A673 (cell line): ENCODE measurements at regions of chr3 and their contacts with region 1.

Region 1: DNA sequence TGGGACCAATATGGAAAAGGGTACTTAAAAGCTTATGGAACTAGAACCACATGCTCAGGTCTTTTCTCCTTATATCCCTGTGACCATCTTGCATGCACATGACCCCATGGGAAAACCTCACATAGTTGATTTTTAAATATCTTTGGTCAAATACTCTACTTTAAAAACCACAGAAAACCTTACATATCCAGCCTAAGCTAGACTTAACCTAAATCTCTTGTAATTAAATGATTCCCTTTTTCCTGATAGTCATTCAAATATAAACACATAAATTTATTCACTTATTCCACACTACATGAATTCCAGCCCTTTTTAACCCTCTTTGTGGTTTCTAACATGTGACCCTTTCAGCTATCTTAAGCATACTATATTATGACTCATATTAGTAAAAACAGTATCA is 46.8 kb downstream of the DNAJC13 start:
- DNase-seq: no peak
- H3K4me3 ChIP-seq: no peak overlapping the region
- H3K27ac ChIP-seq: no peak overlapping the region
- H3K4me1 ChIP-seq: no peaks in the 10 kb centered on the region
- H3K27me3 ChIP-seq: no peaks in the 10 kb centered on the region
- CTCF ChIP-seq: no peak

Region 2: GRCh38 chr3:132507657-132508056 is 43.6 kb after region 1 on chr3:
- CTCF ChIA-PET with region 1: no interaction called
- POLR2A ChIA-PET with region 1: interaction called, 29 read pairs
- intact Hi-C with region 1: no loop called
- DNase-seq: no peak
- H3K4me3 ChIP-seq: no peak overlapping the region
- H3K27ac ChIP-seq: no peak overlapping the region
- H3K4me1 ChIP-seq: no peaks in the 10 kb centered on the region
- H3K27me3 ChIP-seq: no peaks in the 10 kb centered on the region
- CTCF ChIP-seq: no peak